ENCODE measurements at regions of chr6 and their contacts with region 1.

Region 1: GRCh38 chr6:132813173-132813856 is 1.1 kb upstream of the RPS12 start:
- DNase-seq: peak; percentile 33
- ATAC-seq: peak; percentile 17
- H3K4me3 Mint-ChIP-seq: peak overlapping the region; percentile 98
- H3K27ac Mint-ChIP-seq: peak overlapping the region; percentile 99
- H3K4me1 Mint-ChIP-seq: peaks cover 47% of the 10 kb centered on the region
- H3K27me3 Mint-ChIP-seq: no peaks in the 10 kb centered on the region
- CTCF ChIP-seq: no peak

Region 2: GRCh38 chr6:131683479-131683878 is 1129.8 kb before region 1 on chr6:
- CTCF ChIA-PET with region 1: no interaction called
- POLR2A ChIA-PET with region 1: interaction called, 4 read pairs
- intact Hi-C with region 1: loop called (anchors 5 kb)
- DNase-seq: no peak
- ATAC-seq: peak; percentile 67
- H3K4me3 Mint-ChIP-seq: peak overlapping the region; percentile 69
- H3K27ac Mint-ChIP-seq: peak overlapping the region; percentile 86
- H3K4me1 Mint-ChIP-seq: peaks cover 60% of the 10 kb centered on the region
- H3K27me3 Mint-ChIP-seq: no peaks in the 10 kb centered on the region
- CTCF ChIP-seq: no peak

Region 3: DNA sequence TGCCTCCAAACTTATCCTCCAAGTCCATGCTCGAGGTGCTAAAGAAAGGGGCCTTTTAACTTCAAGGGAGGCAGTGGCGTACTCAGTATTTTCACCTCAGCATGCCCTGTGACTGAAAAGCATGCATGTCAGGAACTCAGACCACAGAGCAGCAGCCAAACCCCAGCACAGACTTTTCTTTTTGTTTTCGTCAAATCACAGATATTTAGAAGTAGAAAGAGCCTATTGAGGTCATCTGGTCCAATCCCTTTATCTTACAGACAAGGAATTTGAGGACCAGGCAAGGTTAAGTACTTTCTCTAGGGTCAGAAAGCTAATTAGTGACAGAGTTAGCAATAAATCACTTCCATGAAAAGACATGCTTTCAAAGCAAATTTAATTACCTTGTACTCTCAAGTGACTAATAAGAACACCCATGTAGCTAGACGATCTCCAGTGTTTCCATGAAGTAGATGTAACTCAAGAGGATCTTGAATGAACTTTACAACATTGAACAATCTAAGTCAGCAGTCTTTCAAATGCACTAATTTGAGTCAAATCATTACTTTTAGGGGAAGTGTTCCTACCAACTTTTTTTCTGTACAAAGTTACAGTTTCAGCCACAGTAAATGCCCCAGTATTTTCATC is 447.9 kb before region 1 on chr6:
- CTCF ChIA-PET with region 1: no interaction called
- POLR2A ChIA-PET with region 1: interaction called, 3 read pairs
- intact Hi-C with region 1: loop called (anchors 5 kb)
- DNase-seq: no peak
- ATAC-seq: peak; percentile 83
- H3K4me3 Mint-ChIP-seq: peak overlapping the region; percentile 44
- H3K27ac Mint-ChIP-seq: peak overlapping the region; percentile 82
- H3K4me1 Mint-ChIP-seq: peaks cover 61% of the 10 kb centered on the region
- H3K27me3 Mint-ChIP-seq: no peaks in the 10 kb centered on the region
- CTCF ChIP-seq: no peak

Region 4: DNA sequence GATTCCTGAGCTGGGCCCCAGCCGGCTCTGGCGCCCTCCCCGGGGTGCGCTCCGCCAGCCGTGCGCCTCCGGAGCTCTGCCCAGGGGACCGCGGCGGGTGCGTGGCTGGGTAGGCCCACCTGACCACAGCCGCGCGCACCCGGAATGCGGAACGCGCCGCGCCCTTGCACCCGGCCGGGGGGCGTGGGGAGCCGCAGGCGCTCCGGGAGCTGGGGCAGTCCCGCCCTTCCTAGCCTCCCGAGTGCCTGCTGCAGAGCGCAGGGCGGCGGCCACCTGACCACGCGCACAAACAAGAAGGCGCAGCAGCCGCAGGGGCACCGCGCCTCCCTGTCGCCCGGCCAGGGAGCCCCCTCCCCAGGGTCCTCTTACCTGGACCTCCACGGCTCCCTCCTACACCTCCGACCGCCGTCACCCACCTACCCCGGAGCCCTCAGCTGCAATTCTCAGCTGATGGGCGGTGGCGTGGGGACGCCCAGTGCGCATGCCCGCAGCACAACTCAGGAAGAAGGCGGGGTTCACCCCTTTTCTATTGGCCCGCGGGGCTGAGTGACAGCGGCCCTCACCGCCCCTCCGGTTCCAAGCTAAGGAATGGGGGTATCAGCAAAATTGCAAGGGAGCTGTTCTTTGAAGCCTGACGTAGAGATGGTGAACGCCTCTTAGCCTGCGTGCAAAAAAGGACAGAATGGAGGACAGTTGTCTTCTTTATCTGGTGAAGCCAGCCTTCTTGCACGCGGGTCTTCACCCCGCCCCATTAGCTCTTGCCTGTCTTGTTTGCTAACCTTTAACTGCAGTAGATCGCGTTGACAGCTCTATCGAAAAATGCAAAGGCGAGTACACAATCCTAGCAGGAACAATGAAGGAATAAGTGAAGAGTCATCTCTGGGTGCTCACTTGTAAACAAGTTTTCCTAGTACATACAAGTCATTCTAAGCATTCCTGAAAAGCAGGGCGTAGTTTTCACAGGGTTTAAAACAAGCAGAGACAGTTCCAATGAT is 300.4 kb before region 1 on chr6 and contains the start of gene STX7:
- CTCF ChIA-PET with region 1: no interaction called
- POLR2A ChIA-PET with region 1: interaction called, 41 read pairs
- intact Hi-C with region 1: loop called (anchors 1 kb)
- DNase-seq: peak; percentile 89
- ATAC-seq: peak; percentile 82
- H3K4me3 Mint-ChIP-seq: peak within 1 kb of the TSS; percentile 96
- H3K27ac Mint-ChIP-seq: peak within 1 kb of the TSS; percentile 97
- H3K4me1 Mint-ChIP-seq: peaks cover 68% of the 10 kb centered on the region
- H3K27me3 Mint-ChIP-seq: no peaks in the 10 kb centered on the region
- CTCF ChIP-seq: no peak
- total RNA-seq, gene STX7: 109 and 138 TPM in 2 replicates

Region 5: GRCh38 chr6:132798869-132799538 is 14.3 kb before region 1 on chr6:
- CTCF ChIA-PET with region 1: interaction called, 15 read pairs
- POLR2A ChIA-PET with region 1: interaction called, 180 read pairs
- intact Hi-C with region 1: loop called (anchors 1 kb)
- DNase-seq: peak; percentile 52
- ATAC-seq: peak; percentile 76
- H3K4me3 Mint-ChIP-seq: no peak overlapping the region
- H3K27ac Mint-ChIP-seq: no peak overlapping the region
- H3K4me1 Mint-ChIP-seq: peaks cover 14% of the 10 kb centered on the region
- H3K27me3 Mint-ChIP-seq: no peaks in the 10 kb centered on the region
- CTCF ChIP-seq: no peak

Region 6: DNA sequence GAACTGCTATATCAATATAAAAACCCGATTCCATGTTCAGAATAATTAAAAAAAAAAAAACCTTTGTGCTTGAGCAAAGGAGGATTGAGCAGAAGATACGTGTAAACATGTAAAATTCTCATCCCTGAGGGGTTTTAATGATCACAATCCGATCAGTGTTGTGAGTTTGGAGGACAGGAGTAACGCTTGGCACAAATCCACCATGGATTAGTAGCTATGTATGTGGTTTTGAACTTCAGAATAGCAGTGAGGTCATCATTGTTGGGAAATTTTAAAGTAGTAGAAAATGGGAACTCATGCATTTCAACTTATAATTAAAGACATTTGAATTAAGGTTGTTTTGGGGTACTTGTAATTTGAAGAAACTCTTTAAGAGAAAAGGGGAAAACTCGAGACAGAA is 204.3 kb after region 1 on chr6:
- CTCF ChIA-PET with region 1: no interaction called
- POLR2A ChIA-PET with region 1: no interaction called
- intact Hi-C with region 1: no loop called
- DNase-seq: no peak
- ATAC-seq: no peak
- H3K4me3 Mint-ChIP-seq: no peak overlapping the region
- H3K27ac Mint-ChIP-seq: no peak overlapping the region
- H3K4me1 Mint-ChIP-seq: no peaks in the 10 kb centered on the region
- H3K27me3 Mint-ChIP-seq: peaks cover under 1% of the 10 kb centered on the region
- CTCF ChIP-seq: no peak

Measured in activated B cell treated with CpG ODN at 0.5 μM for 24 hours (primary cell).